Posterior vena cava (tissue), 2 donors: ENCODE measurements at regions of chr11 and their contacts with region 1.

Region 1: DNA sequence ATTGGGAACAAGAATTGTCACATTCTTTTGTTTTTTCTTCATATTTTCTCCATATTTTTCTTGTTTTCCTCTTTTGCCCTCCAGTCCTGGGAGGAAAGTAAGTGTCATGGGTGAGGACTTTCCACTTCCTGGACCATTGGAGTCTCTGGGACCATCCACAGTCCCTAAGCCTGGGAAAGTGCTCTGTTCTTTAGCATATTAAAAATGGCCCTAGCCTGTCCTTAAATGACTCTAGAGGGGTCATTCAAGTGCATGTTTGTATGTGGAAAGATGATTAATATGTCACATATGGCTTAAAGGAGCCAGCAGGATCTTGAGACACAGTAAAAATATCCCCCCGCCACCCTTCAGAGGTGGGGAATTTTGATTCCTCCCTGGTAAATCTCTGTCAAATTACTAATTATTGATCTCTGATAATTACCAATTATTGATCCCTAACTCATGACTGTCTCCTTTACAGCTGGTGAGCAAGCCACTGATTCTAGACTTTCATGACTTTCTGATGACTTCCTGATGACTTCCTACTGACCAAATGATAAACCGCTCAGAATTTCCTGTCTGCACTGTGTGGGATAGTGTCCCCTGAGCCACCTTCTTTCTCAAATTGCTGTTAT is 20.0 kb upstream of the SCGB1D1 start:
- DNase-seq: no peak

Region 2: GRCh38 chr11:62193952-62194351 is 23.9 kb after region 1 on chr11:
- intact Hi-C with region 1: no loop called
- DNase-seq: no peak

Region 3: GRCh38 chr11:62315431-62315830 is 145.4 kb after region 1 on chr11:
- intact Hi-C with region 1: loop called in 1 of 2 experiments (anchors 10 kb)
- DNase-seq: no peak

Region 4: GRCh38 chr11:62665075-62665598 is 495.1 kb after region 1 on chr11 and contains the starts of genes C11orf98 and CSKMT:
- intact Hi-C with region 1: no loop called
- DNase-seq: peak; percentile 98
- total RNA-seq, gene C11orf98: 27.4 to 35.9 TPM
- total RNA-seq, gene CSKMT: 8.5 to 10.5 TPM

Region 5: GRCh38 chr11:62831520-62832335 is 661.7 kb after region 1 on chr11 and contains the start of gene STX5:
- intact Hi-C with region 1: no loop called
- DNase-seq: peak; percentile 100
- total RNA-seq, gene STX5: 32.8 to 34.0 TPM